Esophagus squamous epithelium (tissue), 5 donors: ENCODE measurements at regions of chr16 and their contacts with region 1.

Region 1: GRCh38 chr16:61814726-61815347 is 221.4 kb downstream of the CDH8 start:
- DNase-seq: no peak
- H3K4me3 ChIP-seq: no peak overlapping the region
- H3K27ac ChIP-seq: no peak overlapping the region
- H3K4me1 ChIP-seq: no peaks in the 10 kb centered on the region
- H3K27me3 ChIP-seq: no peaks in the 10 kb centered on the region
- CTCF ChIP-seq: no peak
- POLR2A ChIP-seq: no peak

Region 2: GRCh38 chr16:61379311-61379710 is 435.5 kb before region 1 on chr16:
- intact Hi-C with region 1: no loop called
- DNase-seq: no peak
- H3K4me3 ChIP-seq: no peak overlapping the region
- H3K27ac ChIP-seq: no peak overlapping the region
- H3K4me1 ChIP-seq: no peaks in the 10 kb centered on the region
- H3K27me3 ChIP-seq: no peaks in the 10 kb centered on the region
- CTCF ChIP-seq: no peak
- POLR2A ChIP-seq: no peak

Region 3: DNA sequence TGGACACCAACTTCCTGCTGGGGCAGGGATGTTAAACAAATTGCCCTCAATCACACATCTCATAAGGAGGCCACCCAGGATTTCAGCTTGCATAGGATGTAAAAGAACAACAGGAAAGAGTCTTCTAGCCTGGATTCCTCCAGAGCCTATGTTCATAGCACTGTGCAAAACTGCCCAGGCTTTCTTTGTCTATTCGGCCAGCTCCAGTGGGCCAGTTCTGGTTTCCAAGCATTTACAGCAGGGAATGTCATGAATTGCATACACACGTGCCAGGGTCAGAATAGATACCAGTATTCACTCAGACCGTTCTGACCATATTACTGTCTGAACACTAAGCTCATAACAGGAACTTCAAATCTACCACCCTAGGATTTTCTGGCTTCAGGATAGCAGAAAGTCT is 51.8 kb before region 1 on chr16:
- intact Hi-C with region 1: loop called (anchors 10 kb)
- DNase-seq: no peak
- H3K4me3 ChIP-seq: no peak overlapping the region
- H3K27ac ChIP-seq: no peak overlapping the region
- H3K4me1 ChIP-seq: no peaks in the 10 kb centered on the region
- H3K27me3 ChIP-seq: no peaks in the 10 kb centered on the region
- CTCF ChIP-seq: no peak
- POLR2A ChIP-seq: no peak